Naive thymus-derived CD8-positive, alpha-beta T cell (primary cell): ENCODE measurements at regions of chr12 and their contacts with region 1.

Region 1: GRCh38 chr12:47276621-47277309 is 197.0 kb upstream of the AMIGO2 start:
- DNase-seq: peak; percentile 8 to 87 (median 68)
- ATAC-seq: peak; percentile 92 to 99
- H3K4me3 Mint-ChIP-seq: peak overlapping the region; percentile 16 to 80 (median 72)
- H3K27ac Mint-ChIP-seq: peak overlapping the region; percentile 88 to 96 (median 92)
- H3K4me1 Mint-ChIP-seq: peaks cover 33 to 84% (median 81%) of the 10 kb centered on the region in 4 donors
- H3K27me3 Mint-ChIP-seq: no peaks in the 10 kb centered on the region

Region 2: DNA sequence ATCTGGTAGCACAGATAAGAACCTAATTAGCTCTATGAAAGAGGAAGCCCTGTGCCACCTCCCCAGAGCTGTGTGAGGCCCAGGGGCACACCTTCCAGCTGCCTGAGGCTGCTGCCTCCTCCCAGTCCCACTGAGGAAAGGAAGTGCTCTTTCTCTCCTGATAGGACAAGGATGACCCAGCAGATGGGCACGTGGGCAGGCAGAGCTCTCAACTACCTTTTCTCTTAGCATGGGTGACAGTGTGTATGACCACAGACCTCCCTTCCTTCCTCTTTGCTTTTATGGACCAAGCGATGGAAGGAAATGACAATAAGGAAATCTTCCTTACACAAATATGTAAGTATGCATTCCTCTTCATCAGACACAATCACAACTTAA is 69.4 kb before region 1 on chr12:
- POLR2A ChIA-PET with region 1: interaction called, 12 read pairs
- DNase-seq: peak in 8 of 10 donors; percentile 18 to 70 (median 40)
- ATAC-seq: peak; percentile 41 to 59
- H3K4me3 Mint-ChIP-seq: peak overlapping the region; percentile 62 to 98 (median 86)
- H3K27ac Mint-ChIP-seq: peak overlapping the region; percentile 83 to 99 (median 91)
- H3K4me1 Mint-ChIP-seq: peaks cover 45 to 87% (median 83%) of the 10 kb centered on the region in 4 donors
- H3K27me3 Mint-ChIP-seq: no peaks in the 10 kb centered on the region

Region 3: DNA sequence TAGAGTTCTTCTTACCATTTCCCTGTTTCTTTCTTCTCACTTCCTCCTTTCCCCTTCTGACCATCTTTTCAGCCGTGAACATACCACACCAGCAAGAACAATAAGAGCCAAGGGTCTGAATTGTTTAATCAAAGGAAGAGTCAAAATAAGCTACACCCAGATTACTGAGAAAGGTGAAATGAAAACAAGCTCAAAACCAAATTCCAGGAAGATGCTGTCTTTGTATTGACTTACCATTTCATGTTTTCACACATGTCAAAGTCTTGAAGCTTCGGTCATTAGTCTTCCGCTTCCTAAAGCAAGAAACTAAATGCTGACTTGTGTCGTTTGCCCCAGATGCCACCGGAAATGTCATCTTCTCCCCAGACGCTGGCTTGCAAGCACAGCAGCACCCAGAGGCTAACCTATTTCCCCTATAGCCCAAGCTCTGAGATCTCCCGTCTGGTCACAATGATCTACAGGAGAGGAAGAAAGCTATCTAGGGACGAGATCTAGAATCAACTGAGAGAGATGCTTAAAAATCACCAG is 60.6 kb before region 1 on chr12:
- POLR2A ChIA-PET with region 1: interaction called, 31 read pairs
- DNase-seq: peak in 9 of 10 donors; percentile 50 to 84 (median 70)
- ATAC-seq: peak; percentile 43 to 69
- H3K4me3 Mint-ChIP-seq: peak overlapping the region; percentile 95 to 99 (median 98)
- H3K27ac Mint-ChIP-seq: peak overlapping the region; percentile 93 to 99 (median 96)
- H3K4me1 Mint-ChIP-seq: peaks cover 9 to 66% (median 23%) of the 10 kb centered on the region in 4 donors
- H3K27me3 Mint-ChIP-seq: no peaks in the 10 kb centered on the region

Region 4: GRCh38 chr12:47307680-47308399 is 31.1 kb after region 1 on chr12:
- POLR2A ChIA-PET with region 1: interaction called, 20 read pairs
- DNase-seq: peak in 9 of 10 donors; percentile 27 to 77 (median 50)
- ATAC-seq: peak; percentile 93 to 96
- H3K4me3 Mint-ChIP-seq: peak overlapping the region; percentile 79 to 93 (median 90)
- H3K27ac Mint-ChIP-seq: peak overlapping the region; percentile 69 to 96 (median 92)
- H3K4me1 Mint-ChIP-seq: peaks cover 20 to 45% (median 43%) of the 10 kb centered on the region in 4 donors
- H3K27me3 Mint-ChIP-seq: no peaks in the 10 kb centered on the region